ENCODE measurements at regions of chr12 and their contacts with region 1.

Region 1: GRCh38 chr12:11486623-11487444 is 91.5 kb upstream of the PRB2 start:
- DNase-seq: peak; percentile 83
- H3K4me3 ChIP-seq: no peak overlapping the region
- H3K27ac ChIP-seq: no peak overlapping the region
- H3K4me1 ChIP-seq: peaks cover 17% of the 10 kb centered on the region
- H3K27me3 ChIP-seq: peaks cover 7 to 23% of the 10 kb centered on the region in 2 experiments
- CTCF ChIP-seq: peak; percentile 79 to 95
- POLR2A ChIP-seq: no peak

Region 2: GRCh38 chr12:10235761-10236631 is 1250.8 kb before region 1 on chr12:
- CTCF ChIA-PET with region 1: no interaction called
- POLR2A ChIA-PET with region 1: no interaction called
- dilution Hi-C with region 1: no loop called
- intact Hi-C with region 1: loop called (anchors 10 kb)
- DNase-seq: peak; percentile 55
- H3K4me3 ChIP-seq: no peak overlapping the region
- H3K27ac ChIP-seq: no peak overlapping the region
- H3K4me1 ChIP-seq: no peaks in the 10 kb centered on the region
- H3K27me3 ChIP-seq: no peaks in the 10 kb centered on the region
- CTCF ChIP-seq: peak; percentile 72 to 73
- POLR2A ChIP-seq: no peak

Region 3: GRCh38 chr12:10771132-10771733 is 715.6 kb before region 1 on chr12:
- CTCF ChIA-PET with region 1: interaction called, 164 read pairs
- POLR2A ChIA-PET with region 1: no interaction called
- dilution Hi-C with region 1: no loop called
- intact Hi-C with region 1: loop called (anchors 1 kb)
- DNase-seq: peak; percentile 69
- H3K4me3 ChIP-seq: no peak overlapping the region
- H3K27ac ChIP-seq: no peak overlapping the region
- H3K4me1 ChIP-seq: no peaks in the 10 kb centered on the region
- H3K27me3 ChIP-seq: peaks cover 49 to 79% of the 10 kb centered on the region in 2 experiments
- CTCF ChIP-seq: peak; percentile 35 to 46
- POLR2A ChIP-seq: no peak

Region 4: DNA sequence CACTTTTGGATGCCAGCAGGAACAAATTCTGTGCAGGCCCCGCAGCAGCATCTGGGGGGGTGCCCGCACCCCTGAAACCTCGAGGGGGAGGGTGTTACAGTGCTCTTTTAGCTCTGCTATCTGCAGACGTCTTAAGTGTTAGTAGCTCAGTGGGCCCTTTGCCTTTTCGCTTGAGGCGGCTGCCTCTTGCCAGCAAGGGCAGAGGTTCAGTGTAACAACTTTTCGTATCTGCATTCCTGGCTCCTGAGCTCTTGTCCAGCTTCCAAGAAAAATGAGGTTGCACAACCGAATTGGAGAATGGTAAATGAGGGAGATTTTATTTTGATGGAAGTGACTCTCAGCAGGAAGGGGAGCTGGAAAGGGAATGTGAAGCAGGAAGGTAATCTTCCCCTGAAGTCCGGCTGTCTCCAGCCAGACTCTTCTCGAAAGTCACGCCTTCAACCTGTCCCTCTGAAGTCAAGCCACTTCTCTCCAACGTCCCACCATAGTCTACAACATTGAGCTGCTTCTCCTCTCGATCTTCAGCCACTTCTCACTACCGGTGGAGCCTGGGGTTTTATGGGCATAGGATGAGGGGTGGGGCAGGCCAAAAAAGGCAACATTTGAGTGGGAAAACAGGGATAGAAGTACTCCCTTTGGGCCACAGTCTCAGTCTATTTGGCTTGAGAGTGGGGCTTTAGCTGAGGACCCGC is 517.9 kb before region 1 on chr12:
- CTCF ChIA-PET with region 1: no interaction called
- POLR2A ChIA-PET with region 1: no interaction called
- dilution Hi-C with region 1: no loop called
- intact Hi-C with region 1: loop called (anchors 5 kb)
- DNase-seq: peak; percentile 81
- H3K4me3 ChIP-seq: no peak overlapping the region
- H3K27ac ChIP-seq: peak overlapping the region; percentile 35
- H3K4me1 ChIP-seq: peaks cover 21% of the 10 kb centered on the region
- H3K27me3 ChIP-seq: no peaks in the 10 kb centered on the region
- CTCF ChIP-seq: no peak
- POLR2A ChIP-seq: no peak

Region 5: DNA sequence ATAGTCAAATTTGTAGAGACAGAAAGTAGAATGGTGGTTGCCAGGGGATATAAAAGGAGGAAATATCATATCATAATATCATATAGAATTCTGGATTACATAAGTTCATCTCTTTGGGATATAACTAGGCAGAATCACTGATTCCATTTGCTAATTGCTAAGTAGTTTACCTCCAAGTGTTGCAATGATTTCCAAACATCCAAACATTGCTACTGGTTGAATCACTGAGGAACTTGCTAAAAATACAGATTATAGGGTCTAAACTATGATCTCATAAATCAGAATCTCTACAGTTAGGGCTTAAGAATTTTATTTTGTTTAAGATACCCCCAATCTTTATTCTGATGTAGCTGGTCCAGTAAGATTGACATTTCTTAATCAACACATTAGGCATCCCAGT is 284.0 kb before region 1 on chr12:
- CTCF ChIA-PET with region 1: interaction called, 56 read pairs
- POLR2A ChIA-PET with region 1: no interaction called
- dilution Hi-C with region 1: no loop called
- intact Hi-C with region 1: loop called (anchors 1 kb)
- DNase-seq: no peak
- H3K4me3 ChIP-seq: no peak overlapping the region
- H3K27ac ChIP-seq: no peak overlapping the region
- H3K4me1 ChIP-seq: no peaks in the 10 kb centered on the region
- H3K27me3 ChIP-seq: no peaks in the 10 kb centered on the region
- CTCF ChIP-seq: no peak
- POLR2A ChIP-seq: no peak

Region 6: DNA sequence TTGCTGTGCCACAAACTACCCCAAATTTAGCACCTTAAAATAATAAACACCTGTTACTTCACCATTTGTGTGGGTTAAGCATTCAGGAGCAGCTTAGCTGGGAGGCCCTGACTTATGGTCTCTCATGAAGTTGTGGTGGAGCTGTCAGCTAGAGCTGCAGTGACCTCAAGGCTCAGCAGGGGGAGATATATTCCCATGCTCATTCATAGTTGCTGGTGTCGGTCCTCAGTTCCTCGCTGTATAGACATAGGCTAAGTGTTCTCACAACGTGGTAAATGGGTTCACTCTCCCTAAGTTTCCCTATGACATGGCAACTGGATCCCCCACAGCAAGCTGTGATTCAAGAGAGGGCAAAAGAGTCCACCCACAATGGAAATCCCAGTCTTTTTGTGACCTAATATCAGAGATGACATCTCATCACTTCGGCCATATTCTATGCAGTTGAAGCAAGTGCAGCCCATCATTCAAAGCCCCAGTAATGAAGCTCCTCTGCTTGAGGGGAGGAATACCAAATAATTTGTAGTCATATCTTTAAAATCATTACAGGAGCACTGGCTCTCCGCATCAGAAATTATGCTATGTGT is 258.4 kb before region 1 on chr12:
- CTCF ChIA-PET with region 1: interaction called, 177 read pairs
- POLR2A ChIA-PET with region 1: no interaction called
- dilution Hi-C with region 1: loop called (anchors 25 kb)
- intact Hi-C with region 1: loop called (anchors 1 kb)
- DNase-seq: peak; percentile 73
- H3K4me3 ChIP-seq: no peak overlapping the region
- H3K27ac ChIP-seq: no peak overlapping the region
- H3K4me1 ChIP-seq: no peaks in the 10 kb centered on the region
- H3K27me3 ChIP-seq: peaks cover 5 to 13% of the 10 kb centered on the region in 2 experiments
- CTCF ChIP-seq: peak; percentile 80 to 84
- POLR2A ChIP-seq: no peak

Region 7: GRCh38 chr12:11347810-11348209 is 139.0 kb before region 1 on chr12:
- CTCF ChIA-PET with region 1: no interaction called
- POLR2A ChIA-PET with region 1: no interaction called
- dilution Hi-C with region 1: no loop called
- intact Hi-C with region 1: loop called (anchors 5 kb)
- DNase-seq: no peak
- H3K4me3 ChIP-seq: no peak overlapping the region
- H3K27ac ChIP-seq: no peak overlapping the region
- H3K4me1 ChIP-seq: peaks cover 6% of the 10 kb centered on the region
- H3K27me3 ChIP-seq: no peaks in the 10 kb centered on the region
- CTCF ChIP-seq: peak in 1 of 2 donors; percentile 15
- POLR2A ChIP-seq: no peak

Measured in endothelial cell of umbilical vein (primary cell).